Panc1 (cell line): ENCODE measurements at regions of chr3 and their contacts with region 1.

Region 1: GRCh38 chr3:8987645-8988383 is 24.5 kb upstream of the RAD18 start:
- DNase-seq: no peak
- ATAC-seq: peak; percentile 68; the same call in 1 of the 2 replicates
- H3K4me3 ChIP-seq: no peak overlapping the region
- H3K27ac ChIP-seq: no peak overlapping the region
- H3K4me1 ChIP-seq: no peaks in the 10 kb centered on the region
- H3K27me3 ChIP-seq: no peaks in the 10 kb centered on the region
- CTCF ChIP-seq: peak; percentile 81

Region 2: GRCh38 chr3:8938021-8938420 is 49.8 kb before region 1 on chr3:
- CTCF ChIA-PET with region 1: interaction called, 17 read pairs
- POLR2A ChIA-PET with region 1: no interaction called
- in situ Hi-C with region 1: no loop called
- intact Hi-C with region 1: no loop called
- DNase-seq: no peak
- ATAC-seq: no peak
- H3K4me3 ChIP-seq: no peak overlapping the region
- H3K27ac ChIP-seq: peak overlapping the region; percentile 84
- H3K4me1 ChIP-seq: peaks cover 24% of the 10 kb centered on the region
- H3K27me3 ChIP-seq: no peaks in the 10 kb centered on the region
- CTCF ChIP-seq: peak; percentile 42; the same call in 1 of the 2 replicates

Region 3: GRCh38 chr3:9067352-9067975 is 79.7 kb after region 1 on chr3:
- CTCF ChIA-PET with region 1: no interaction called
- POLR2A ChIA-PET with region 1: no interaction called
- in situ Hi-C with region 1: no loop called
- intact Hi-C with region 1: loop called (anchors 5 kb)
- DNase-seq: peak; percentile 45
- ATAC-seq: peak; percentile 86
- H3K4me3 ChIP-seq: no peak overlapping the region
- H3K27ac ChIP-seq: no peak overlapping the region
- H3K4me1 ChIP-seq: no peaks in the 10 kb centered on the region
- H3K27me3 ChIP-seq: no peaks in the 10 kb centered on the region; the same call in 1 of the 2 replicates
- CTCF ChIP-seq: peak; percentile 95

Region 4: DNA sequence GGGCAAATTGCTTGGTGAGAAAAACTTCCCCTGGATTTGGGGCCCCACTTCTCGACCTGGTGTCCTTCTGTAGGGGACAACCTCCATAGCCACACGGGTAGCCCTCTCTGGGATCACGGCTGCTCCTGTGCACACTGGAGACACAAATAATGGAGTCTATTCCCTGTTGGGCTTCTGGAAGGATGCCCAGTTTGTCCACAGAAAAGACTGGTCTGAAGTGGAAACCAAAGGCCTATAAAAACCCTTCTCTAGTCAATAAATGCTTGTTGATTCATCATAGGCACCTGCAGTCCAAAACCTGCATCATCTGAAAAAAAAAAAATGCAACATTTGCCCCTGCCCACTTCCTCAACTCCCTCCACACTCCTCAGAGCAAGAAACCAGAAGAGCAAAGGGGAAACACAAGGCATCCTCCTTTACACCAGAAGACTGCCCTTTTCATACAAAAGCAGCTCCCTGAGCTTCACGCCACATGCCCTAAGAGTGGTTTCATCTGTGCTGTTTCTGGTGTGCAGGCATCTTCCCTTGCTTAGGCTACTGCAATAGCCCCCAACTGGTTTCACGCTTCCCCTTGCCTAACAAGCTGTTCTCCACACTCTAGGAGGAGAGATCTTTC is 225.3 kb after region 1 on chr3:
- CTCF ChIA-PET with region 1: interaction called, 14 read pairs
- POLR2A ChIA-PET with region 1: no interaction called
- in situ Hi-C with region 1: no loop called
- intact Hi-C with region 1: no loop called
- DNase-seq: no peak
- ATAC-seq: no peak
- H3K4me3 ChIP-seq: no peak overlapping the region
- H3K27ac ChIP-seq: no peak overlapping the region
- H3K4me1 ChIP-seq: no peaks in the 10 kb centered on the region
- H3K27me3 ChIP-seq: no peaks in the 10 kb centered on the region
- CTCF ChIP-seq: no peak

Region 5: GRCh38 chr3:9302425-9303181 is 314.8 kb after region 1 on chr3:
- CTCF ChIA-PET with region 1: interaction called, 4 read pairs
- POLR2A ChIA-PET with region 1: no interaction called
- in situ Hi-C with region 1: no loop called
- intact Hi-C with region 1: loop called (anchors 5 kb)
- DNase-seq: peak; percentile 18
- ATAC-seq: peak; percentile 98
- H3K4me3 ChIP-seq: no peak overlapping the region
- H3K27ac ChIP-seq: no peak overlapping the region
- H3K4me1 ChIP-seq: no peaks in the 10 kb centered on the region
- H3K27me3 ChIP-seq: no peaks in the 10 kb centered on the region
- CTCF ChIP-seq: peak; percentile 88